Heart right ventricle (tissue), 16 donors: ENCODE measurements at regions of chr6 and their contacts with region 1.

Region 1: DNA sequence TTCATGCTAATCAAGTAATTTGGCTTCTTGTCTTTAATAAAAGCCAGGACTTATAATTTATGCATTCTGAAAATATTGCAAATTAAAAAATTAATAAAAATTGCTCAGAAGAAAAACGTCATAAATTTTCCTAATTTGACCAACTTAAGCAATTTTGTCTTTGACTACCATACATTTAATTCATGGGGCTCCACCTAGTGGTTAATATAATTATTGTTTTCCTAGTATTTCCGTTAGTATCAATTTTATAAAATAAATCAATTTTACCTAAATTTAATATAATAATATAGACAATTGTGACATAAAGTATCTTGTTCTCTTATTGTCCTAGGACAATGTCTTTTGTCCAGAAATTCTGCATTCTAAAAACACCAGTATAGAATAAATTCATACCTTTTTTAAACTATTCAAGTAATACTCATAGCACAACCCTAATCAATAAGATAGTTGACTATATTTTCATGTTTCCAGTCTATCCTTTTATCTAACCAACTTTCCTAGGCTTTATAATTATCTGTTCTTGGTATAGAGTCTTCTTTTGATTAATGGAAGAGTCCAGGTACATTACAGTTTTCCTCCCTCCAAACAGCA is 319.9 kb downstream of the TRDN start:
- DNase-seq: no peak
- ATAC-seq: no peak
- H3K4me3 ChIP-seq: no peak overlapping the region
- H3K27ac ChIP-seq: no peak overlapping the region
- H3K4me1 ChIP-seq: no peaks in the 10 kb centered on the region
- H3K27me3 ChIP-seq: no peaks in the 10 kb centered on the region
- CTCF ChIP-seq: peak; percentile 34 to 73 (median 64)

Region 2: GRCh38 chr6:122730775-122731386 is 585.9 kb before region 1 on chr6:
- intact Hi-C with region 1: loop called in 6 of 10 experiments (anchors 10 kb)
- DNase-seq: no peak
- ATAC-seq: no peak
- H3K4me3 ChIP-seq: no peak overlapping the region
- H3K27ac ChIP-seq: no peak overlapping the region
- H3K4me1 ChIP-seq: no peaks in the 10 kb centered on the region
- H3K27me3 ChIP-seq: peaks cover 0 to 32% (median 8%) of the 10 kb centered on the region in 7 donors
- CTCF ChIP-seq: peak; percentile 49 to 89 (median 79)

Region 3: GRCh38 chr6:122770835-122771601 is 545.8 kb before region 1 on chr6:
- intact Hi-C with region 1: no loop called
- DNase-seq: no peak
- ATAC-seq: no peak
- H3K4me3 ChIP-seq: no peak overlapping the region
- H3K27ac ChIP-seq: no peak overlapping the region
- H3K4me1 ChIP-seq: peaks cover 0 to 13% (median 0%) of the 10 kb centered on the region in 9 donors
- H3K27me3 ChIP-seq: peaks cover 0 to 33% (median 3%) of the 10 kb centered on the region in 7 donors
- CTCF ChIP-seq: no peak

Region 4: DNA sequence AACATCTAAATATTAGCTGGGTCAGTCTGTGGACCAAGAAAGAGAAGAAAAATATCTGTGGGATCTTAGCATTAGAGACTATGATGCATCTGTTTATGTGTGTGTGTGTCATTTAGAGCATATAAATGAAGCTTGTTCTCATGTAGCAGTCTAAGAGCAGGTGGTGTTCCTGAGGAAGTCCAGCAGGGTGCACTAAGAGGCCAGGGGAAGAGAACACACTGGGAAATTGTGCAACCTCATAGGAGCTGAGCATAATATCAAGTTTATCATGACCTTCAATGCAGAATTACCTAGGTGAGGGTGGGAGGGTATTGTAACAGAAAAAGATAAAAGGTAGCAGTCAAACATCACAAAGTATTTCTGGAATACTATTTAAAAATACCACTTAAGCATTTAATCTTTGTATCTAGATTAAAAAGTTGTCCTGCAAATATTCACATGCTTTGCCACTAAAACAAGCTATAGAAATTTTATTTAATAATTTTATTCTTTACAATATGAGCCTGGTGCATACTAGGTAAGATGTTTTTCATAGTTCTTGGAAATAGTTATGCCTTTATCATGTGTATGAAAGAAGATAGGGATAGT is 447.3 kb before region 1 on chr6:
- intact Hi-C with region 1: loop called in 9 of 10 experiments (anchors 2 to 5 kb)
- DNase-seq: peak in 1 of 2 donors; percentile 9
- ATAC-seq: peak in 5 of 8 donors; percentile 65 to 93 (median 73)
- H3K4me3 ChIP-seq: no peak overlapping the region
- H3K27ac ChIP-seq: no peak overlapping the region
- H3K4me1 ChIP-seq: no peaks in the 10 kb centered on the region
- H3K27me3 ChIP-seq: peaks cover 0 to 13% (median 0%) of the 10 kb centered on the region in 7 donors
- CTCF ChIP-seq: peak; percentile 25 to 63 (median 55)

Region 5: GRCh38 chr6:122913558-122913957 is 403.3 kb before region 1 on chr6:
- intact Hi-C with region 1: no loop called
- DNase-seq: no peak
- ATAC-seq: no peak
- H3K4me3 ChIP-seq: no peak overlapping the region
- H3K27ac ChIP-seq: no peak overlapping the region
- H3K4me1 ChIP-seq: no peaks in the 10 kb centered on the region
- H3K27me3 ChIP-seq: no peaks in the 10 kb centered on the region
- CTCF ChIP-seq: no peak

Region 6: GRCh38 chr6:122947355-122947754 is 369.5 kb before region 1 on chr6:
- intact Hi-C with region 1: loop called in 3 of 10 experiments (anchors 5 to 10 kb)
- DNase-seq: no peak
- ATAC-seq: no peak
- H3K4me3 ChIP-seq: no peak overlapping the region
- H3K27ac ChIP-seq: no peak overlapping the region
- H3K4me1 ChIP-seq: no peaks in the 10 kb centered on the region
- H3K27me3 ChIP-seq: peaks cover 0 to 5% (median 0%) of the 10 kb centered on the region in 7 donors
- CTCF ChIP-seq: peak in 6 of 9 donors; percentile 21 to 46 (median 33)

Region 7: GRCh38 chr6:122956376-122956775 is 360.5 kb before region 1 on chr6:
- intact Hi-C with region 1: loop called in 1 of 10 experiments (anchors 10 kb)
- DNase-seq: no peak
- ATAC-seq: no peak
- H3K4me3 ChIP-seq: no peak overlapping the region
- H3K27ac ChIP-seq: no peak overlapping the region
- H3K4me1 ChIP-seq: no peaks in the 10 kb centered on the region
- H3K27me3 ChIP-seq: no peaks in the 10 kb centered on the region
- CTCF ChIP-seq: no peak

Region 8: DNA sequence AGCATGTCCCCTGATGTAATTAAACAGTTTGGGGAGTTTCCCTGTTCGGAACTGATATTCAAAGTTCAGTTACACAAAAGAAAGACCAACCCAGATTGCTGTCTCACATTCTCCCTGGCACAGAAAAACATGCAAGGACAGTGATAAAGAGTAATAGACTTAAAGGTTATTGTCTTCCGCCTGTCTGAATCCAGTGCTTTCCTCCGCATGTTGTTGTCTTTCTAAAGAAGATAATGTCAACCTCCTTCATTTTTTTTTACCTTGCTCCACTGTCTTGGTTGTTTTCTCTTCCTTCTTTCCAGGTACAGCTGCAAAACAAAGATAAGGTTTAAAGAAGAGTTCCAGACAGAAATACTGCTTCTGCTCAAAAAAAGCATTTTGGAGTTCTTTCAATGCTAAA is 35.5 kb after region 1 on chr6:
- intact Hi-C with region 1: no loop called
- DNase-seq: no peak
- ATAC-seq: no peak
- H3K4me3 ChIP-seq: no peak overlapping the region
- H3K27ac ChIP-seq: no peak overlapping the region
- H3K4me1 ChIP-seq: no peaks in the 10 kb centered on the region
- H3K27me3 ChIP-seq: no peaks in the 10 kb centered on the region
- CTCF ChIP-seq: no peak